ENCODE measurements at regions of chr14 and their contacts with region 1.

Region 1: GRCh38 chr14:37241198-37241597 is 43.5 kb downstream of the MIPOL1 start:
- DNase-seq: no peak
- H3K4me3 ChIP-seq: no peak overlapping the region
- H3K27ac ChIP-seq: no peak overlapping the region
- H3K4me1 ChIP-seq: no peaks in the 10 kb centered on the region
- H3K27me3 ChIP-seq: no peaks in the 10 kb centered on the region
- CTCF ChIP-seq: no peak
- EP300 ChIP-seq: no peak
- RAD21 ChIP-seq: no peak

Region 2: DNA sequence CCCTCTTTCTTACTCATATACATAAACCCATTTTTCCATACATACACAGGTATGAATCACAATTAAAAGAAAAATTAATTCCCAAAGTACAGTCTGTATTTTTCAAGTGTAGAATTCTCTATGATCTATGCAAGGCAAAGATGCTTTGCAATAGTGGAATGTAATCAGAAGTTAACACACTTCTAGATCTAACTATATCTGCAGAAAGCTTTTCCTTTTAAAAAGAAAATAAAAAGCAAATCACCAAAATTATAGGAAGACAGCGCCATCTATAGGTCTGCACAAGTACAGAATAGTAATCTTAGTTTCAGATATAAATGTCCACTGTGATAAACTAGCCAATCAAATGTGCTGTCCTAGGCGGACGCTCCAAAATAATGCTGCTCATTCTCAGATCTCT is 90.8 kb before region 1 on chr14:
- CTCF ChIA-PET with region 1: no interaction called
- POLR2A ChIA-PET with region 1: no interaction called
- DNase-seq: peak; percentile 5
- H3K4me3 ChIP-seq: peak overlapping the region in 1 of 2 experiments; percentile 29; a peak in 1 of 4 replicates
- H3K27ac ChIP-seq: no peak overlapping the region
- H3K4me1 ChIP-seq: no peaks in the 10 kb centered on the region
- H3K27me3 ChIP-seq: no peaks in the 10 kb centered on the region
- CTCF ChIP-seq: peak; percentile 65
- EP300 ChIP-seq: no peak
- RAD21 ChIP-seq: peak; percentile 8; the same call in 1 of the 2 replicates

Region 3: DNA sequence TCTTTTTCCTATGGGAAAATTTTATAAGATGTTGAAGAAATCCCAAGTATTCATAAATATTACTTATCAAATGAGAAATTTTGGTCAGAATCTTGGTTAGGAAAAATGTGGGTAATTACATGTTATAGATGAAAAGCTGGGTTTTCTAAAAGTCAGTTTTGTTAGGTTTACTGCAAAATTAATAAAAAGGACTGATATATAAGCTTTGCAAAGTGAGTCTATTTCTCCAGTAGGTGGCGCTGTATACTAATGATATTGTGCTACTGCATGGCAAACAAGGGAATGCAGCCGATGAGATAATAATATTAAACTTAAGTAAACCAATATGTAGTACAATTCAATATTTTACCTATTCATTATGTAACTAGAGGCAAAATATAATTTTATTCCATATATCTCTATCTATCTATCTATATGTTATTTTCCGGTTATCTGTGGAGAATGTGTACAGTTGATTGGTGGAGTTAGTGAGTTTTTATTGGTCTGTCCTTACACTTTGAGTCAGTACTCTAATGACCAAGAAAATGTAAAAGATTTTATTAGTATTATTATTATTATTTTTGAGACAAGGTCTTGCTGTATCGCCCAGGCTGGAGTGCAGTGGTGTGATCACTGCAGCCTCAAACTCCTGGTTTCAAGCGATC is 10.5 kb before region 1 on chr14:
- CTCF ChIA-PET with region 1: interaction called, 14 read pairs
- POLR2A ChIA-PET with region 1: no interaction called
- DNase-seq: peak; percentile 11
- H3K4me3 ChIP-seq: peak overlapping the region in 1 of 2 experiments; percentile 32; a peak in 1 of 4 replicates
- H3K27ac ChIP-seq: no peak overlapping the region
- H3K4me1 ChIP-seq: no peaks in the 10 kb centered on the region
- H3K27me3 ChIP-seq: no peaks in the 10 kb centered on the region
- CTCF ChIP-seq: peak; percentile 72
- EP300 ChIP-seq: no peak
- RAD21 ChIP-seq: peak; percentile 30; the same call in 1 of the 2 replicates